ENCODE measurements at regions of chr9 and their contacts with region 1.

Region 1: GRCh38 chr9:36873247-36873875 is 160.7 kb downstream of the PAX5 start:
- DNase-seq: peak; percentile 81
- H3K4me3 Mint-ChIP-seq: no peak overlapping the region
- H3K27ac Mint-ChIP-seq: no peak overlapping the region
- H3K4me1 Mint-ChIP-seq: no peaks in the 10 kb centered on the region
- H3K27me3 Mint-ChIP-seq: peaks cover under 1% of the 10 kb centered on the region

Region 2: DNA sequence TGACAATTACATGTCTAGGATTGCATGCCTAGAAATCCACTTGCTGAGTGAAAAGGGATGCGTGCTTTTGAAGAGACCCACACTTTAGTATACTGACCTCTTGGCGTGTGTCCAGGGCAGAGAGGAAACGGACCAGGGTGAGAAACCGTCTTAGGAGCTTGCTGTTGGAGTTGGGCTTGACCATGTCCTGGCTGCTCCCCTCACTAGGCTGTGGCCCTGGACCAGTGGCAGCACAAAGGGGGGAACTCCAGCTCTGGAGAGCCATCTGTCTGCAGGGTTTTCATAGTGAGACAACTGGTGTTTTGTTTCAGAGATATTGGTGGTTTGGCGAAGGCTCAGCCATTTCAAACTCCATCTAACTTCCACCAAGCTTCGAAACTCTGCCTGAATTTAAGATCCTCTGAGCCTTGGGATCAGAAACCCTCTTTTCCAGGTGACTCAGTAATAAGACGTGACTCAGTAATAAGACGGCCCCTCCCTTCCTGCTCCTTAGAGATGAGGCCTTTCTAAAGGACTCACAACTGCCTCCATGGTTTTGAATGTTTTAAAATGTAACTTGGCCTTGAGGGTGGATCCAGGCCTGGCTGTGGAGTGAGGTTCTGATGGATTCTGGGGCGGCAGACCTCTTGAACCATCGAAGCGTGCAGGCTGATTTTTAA is 134.9 kb before region 1 on chr9:
- CTCF ChIA-PET with region 1: no interaction called
- POLR2A ChIA-PET with region 1: no interaction called
- intact Hi-C with region 1: no loop called
- DNase-seq: no peak
- H3K4me3 Mint-ChIP-seq: no peak overlapping the region
- H3K27ac Mint-ChIP-seq: no peak overlapping the region
- H3K4me1 Mint-ChIP-seq: peaks cover 3% of the 10 kb centered on the region
- H3K27me3 Mint-ChIP-seq: peaks cover 38% of the 10 kb centered on the region

Region 3: DNA sequence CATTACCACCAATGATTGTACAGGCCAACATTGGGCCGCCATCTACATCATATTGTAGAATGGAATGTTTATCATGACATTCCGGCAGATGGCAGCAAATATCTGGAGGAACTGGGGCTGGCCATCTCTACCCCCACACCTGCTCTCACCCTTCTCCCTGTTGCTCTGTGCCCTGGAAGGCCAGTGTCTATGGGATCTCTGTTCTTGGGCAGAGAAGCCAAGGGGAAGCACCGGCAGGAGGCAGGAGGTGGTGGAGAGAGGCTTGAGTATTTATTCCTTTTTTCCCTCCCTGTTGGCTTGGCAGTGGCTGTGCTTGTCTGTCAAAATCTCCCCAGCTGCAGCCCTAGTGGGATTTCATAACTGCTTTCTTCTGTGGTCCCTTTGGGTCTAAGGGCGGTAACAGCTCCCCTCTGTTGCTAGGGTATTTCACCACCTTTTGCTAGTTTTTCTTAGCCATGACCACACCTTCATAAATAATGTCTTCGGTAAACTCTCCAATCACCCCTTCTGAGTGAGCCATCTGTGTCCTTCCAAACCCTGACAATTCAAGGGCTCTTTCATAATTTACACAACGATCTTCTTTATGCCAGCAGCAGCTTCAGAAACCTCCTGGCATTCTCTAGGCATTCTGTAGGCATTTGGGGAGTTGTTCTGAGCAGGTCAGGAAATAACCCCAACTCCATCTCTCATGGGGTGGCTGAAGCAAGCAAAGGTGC is 74.9 kb before region 1 on chr9:
- CTCF ChIA-PET with region 1: no interaction called
- POLR2A ChIA-PET with region 1: no interaction called
- intact Hi-C with region 1: no loop called
- DNase-seq: no peak
- H3K4me3 Mint-ChIP-seq: no peak overlapping the region
- H3K27ac Mint-ChIP-seq: no peak overlapping the region
- H3K4me1 Mint-ChIP-seq: no peaks in the 10 kb centered on the region
- H3K27me3 Mint-ChIP-seq: peaks cover 12% of the 10 kb centered on the region

Region 4: GRCh38 chr9:36862206-36863145 is 10.9 kb before region 1 on chr9:
- CTCF ChIA-PET with region 1: interaction called, 36 read pairs
- POLR2A ChIA-PET with region 1: no interaction called
- intact Hi-C with region 1: no loop called
- DNase-seq: peak; percentile 23
- H3K4me3 Mint-ChIP-seq: no peak overlapping the region
- H3K27ac Mint-ChIP-seq: no peak overlapping the region
- H3K4me1 Mint-ChIP-seq: no peaks in the 10 kb centered on the region
- H3K27me3 Mint-ChIP-seq: peaks cover 9% of the 10 kb centered on the region

Region 5: GRCh38 chr9:36891341-36891959 is 18.1 kb after region 1 on chr9:
- CTCF ChIA-PET with region 1: interaction called, 12 read pairs
- POLR2A ChIA-PET with region 1: no interaction called
- intact Hi-C with region 1: no loop called
- DNase-seq: no peak
- H3K4me3 Mint-ChIP-seq: no peak overlapping the region
- H3K27ac Mint-ChIP-seq: no peak overlapping the region
- H3K4me1 Mint-ChIP-seq: no peaks in the 10 kb centered on the region
- H3K27me3 Mint-ChIP-seq: peaks cover 2% of the 10 kb centered on the region

Region 6: GRCh38 chr9:36985061-36985768 is 111.9 kb after region 1 on chr9:
- CTCF ChIA-PET with region 1: interaction called, 138 read pairs
- POLR2A ChIA-PET with region 1: no interaction called
- intact Hi-C with region 1: no loop called
- DNase-seq: no peak
- H3K4me3 Mint-ChIP-seq: peak overlapping the region; percentile 24
- H3K27ac Mint-ChIP-seq: no peak overlapping the region
- H3K4me1 Mint-ChIP-seq: peaks cover 18% of the 10 kb centered on the region
- H3K27me3 Mint-ChIP-seq: peaks cover 59% of the 10 kb centered on the region

Region 7: GRCh38 chr9:37309136-37309535 is 435.8 kb after region 1 on chr9:
- CTCF ChIA-PET with region 1: interaction called, 6 read pairs
- POLR2A ChIA-PET with region 1: no interaction called
- intact Hi-C with region 1: loop called (anchors 10 kb)
- DNase-seq: peak; percentile 40
- H3K4me3 Mint-ChIP-seq: no peak overlapping the region
- H3K27ac Mint-ChIP-seq: no peak overlapping the region
- H3K4me1 Mint-ChIP-seq: peaks cover 3% of the 10 kb centered on the region
- H3K27me3 Mint-ChIP-seq: no peaks in the 10 kb centered on the region

Region 8: GRCh38 chr9:37390759-37391158 is 517.4 kb after region 1 on chr9:
- CTCF ChIA-PET with region 1: interaction called, 5 read pairs
- POLR2A ChIA-PET with region 1: no interaction called
- intact Hi-C with region 1: loop called (anchors 5 kb)
- DNase-seq: peak; percentile 62
- H3K4me3 Mint-ChIP-seq: no peak overlapping the region
- H3K27ac Mint-ChIP-seq: no peak overlapping the region
- H3K4me1 Mint-ChIP-seq: peaks cover 2% of the 10 kb centered on the region
- H3K27me3 Mint-ChIP-seq: no peaks in the 10 kb centered on the region